Activated CD4-positive, alpha-beta memory T cell treated with anti-CD3 and anti-CD28 coated beads for 36 hours (primary cell): ENCODE measurements at regions of chr10 and their contacts with region 1.

Region 1: DNA sequence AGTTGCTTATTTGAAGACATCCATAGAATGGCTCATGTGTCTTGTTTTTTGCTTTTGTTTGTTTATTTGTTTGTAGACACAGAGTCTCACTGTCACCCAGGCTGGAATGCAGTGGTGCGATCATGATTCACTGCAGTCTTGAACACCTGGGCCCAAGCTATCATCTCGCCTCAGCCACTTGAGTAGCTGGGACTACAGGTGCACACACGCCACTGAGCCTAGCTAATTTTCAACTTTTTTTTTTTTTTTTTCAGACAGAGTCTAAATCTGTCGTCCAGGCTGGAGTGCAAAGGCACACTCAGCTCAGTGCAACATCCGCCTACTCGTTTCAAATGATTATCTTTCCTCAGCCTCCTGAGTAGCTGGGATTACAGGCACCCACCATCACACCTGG is 83.3 kb upstream of the KLF6 start:
- DNase-seq: no peak
- H3K4me3 Mint-ChIP-seq: no peak overlapping the region
- H3K27ac Mint-ChIP-seq: peak overlapping the region; percentile 93
- H3K4me1 Mint-ChIP-seq: peaks cover 76% of the 10 kb centered on the region
- H3K27me3 Mint-ChIP-seq: no peaks in the 10 kb centered on the region

Region 2: DNA sequence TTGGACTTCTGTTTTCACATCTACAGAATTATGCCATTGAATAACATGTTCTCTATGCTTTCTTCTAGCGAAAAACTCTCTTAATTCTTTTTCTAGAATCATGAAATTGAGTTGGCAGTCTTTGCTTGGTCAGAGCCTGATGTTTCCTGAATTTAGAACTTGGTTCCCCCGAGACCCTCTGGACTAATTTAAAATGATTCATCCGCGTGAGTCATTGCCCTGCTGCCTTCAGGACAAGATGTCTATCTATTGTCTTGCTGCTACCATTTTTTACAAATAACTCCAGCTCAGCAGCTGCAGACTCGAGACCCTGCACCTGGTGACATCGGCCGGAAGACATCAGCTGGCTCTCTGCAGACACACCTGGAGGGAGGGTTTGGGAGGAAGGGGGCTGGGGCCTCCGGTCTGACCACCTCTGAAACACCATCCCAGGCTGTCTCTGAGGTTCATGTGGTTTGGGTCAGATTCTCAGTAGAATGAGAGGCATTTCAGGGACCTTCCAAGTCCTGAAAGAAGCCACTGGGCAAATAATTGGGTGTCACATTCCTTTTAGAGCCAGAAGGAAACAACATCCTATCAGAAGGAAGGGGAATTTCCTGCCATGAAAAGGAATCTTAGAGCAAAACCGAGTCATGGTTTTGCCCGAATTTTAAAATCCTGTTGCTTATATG is 62.3 kb before region 1 on chr10:
- CTCF ChIA-PET with region 1: interaction called, 6 read pairs
- POLR2A ChIA-PET with region 1: interaction called, 82 read pairs
- intact Hi-C with region 1: loop called (anchors 1 kb)
- DNase-seq: peak; percentile 72
- H3K4me3 Mint-ChIP-seq: peak overlapping the region; percentile 68
- H3K27ac Mint-ChIP-seq: no peak overlapping the region
- H3K4me1 Mint-ChIP-seq: peaks cover 62% of the 10 kb centered on the region
- H3K27me3 Mint-ChIP-seq: no peaks in the 10 kb centered on the region

Region 3: DNA sequence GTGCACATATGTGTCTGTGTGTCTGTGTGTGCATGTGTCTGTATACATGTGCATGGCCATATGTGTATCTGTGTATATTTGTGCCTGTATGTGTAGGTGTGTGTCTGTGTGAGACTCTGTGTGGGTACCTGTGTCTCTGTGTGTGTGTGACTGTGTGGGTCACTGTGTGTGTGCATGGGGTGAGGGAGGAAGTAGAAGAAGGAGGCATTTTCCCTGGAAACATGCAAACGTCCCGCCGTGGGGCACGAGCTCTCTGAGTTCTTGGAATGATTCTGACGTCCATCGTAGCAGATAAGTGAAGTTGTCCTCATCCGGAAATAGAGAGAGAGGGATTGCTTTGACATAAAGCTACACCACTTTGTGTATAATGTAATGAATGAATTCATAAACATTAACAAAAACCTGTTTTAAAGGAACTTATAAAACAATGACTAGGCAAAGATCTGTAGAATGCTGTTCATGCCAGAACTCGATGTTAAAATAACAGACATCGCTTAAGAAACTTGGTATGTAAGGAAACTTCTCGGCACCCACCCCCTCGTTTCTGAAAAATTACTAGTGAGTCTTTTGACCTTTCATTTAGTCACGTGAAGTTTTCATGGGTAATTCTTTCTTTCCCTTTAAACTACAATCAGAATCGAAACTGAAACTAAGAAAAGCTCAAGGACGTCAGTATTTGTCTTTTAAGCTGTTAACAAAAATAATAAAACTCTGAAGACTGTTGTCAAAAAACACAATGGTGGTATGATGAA is 39.7 kb before region 1 on chr10:
- CTCF ChIA-PET with region 1: interaction called, 3 read pairs
- POLR2A ChIA-PET with region 1: interaction called, 15 read pairs
- intact Hi-C with region 1: loop called (anchors 1 kb)
- DNase-seq: peak; percentile 70
- H3K4me3 Mint-ChIP-seq: peak overlapping the region; percentile 56
- H3K27ac Mint-ChIP-seq: peak overlapping the region; percentile 97
- H3K4me1 Mint-ChIP-seq: peaks cover 63% of the 10 kb centered on the region
- H3K27me3 Mint-ChIP-seq: no peaks in the 10 kb centered on the region

Region 4: GRCh38 chr10:3835770-3836169 is 32.5 kb before region 1 on chr10:
- CTCF ChIA-PET with region 1: no interaction called
- POLR2A ChIA-PET with region 1: interaction called, 11 read pairs
- intact Hi-C with region 1: loop called (anchors 1 kb)
- DNase-seq: no peak
- H3K4me3 Mint-ChIP-seq: peak overlapping the region; percentile 43
- H3K27ac Mint-ChIP-seq: peak overlapping the region; percentile 80
- H3K4me1 Mint-ChIP-seq: peaks cover 72% of the 10 kb centered on the region
- H3K27me3 Mint-ChIP-seq: no peaks in the 10 kb centered on the region

Region 5: DNA sequence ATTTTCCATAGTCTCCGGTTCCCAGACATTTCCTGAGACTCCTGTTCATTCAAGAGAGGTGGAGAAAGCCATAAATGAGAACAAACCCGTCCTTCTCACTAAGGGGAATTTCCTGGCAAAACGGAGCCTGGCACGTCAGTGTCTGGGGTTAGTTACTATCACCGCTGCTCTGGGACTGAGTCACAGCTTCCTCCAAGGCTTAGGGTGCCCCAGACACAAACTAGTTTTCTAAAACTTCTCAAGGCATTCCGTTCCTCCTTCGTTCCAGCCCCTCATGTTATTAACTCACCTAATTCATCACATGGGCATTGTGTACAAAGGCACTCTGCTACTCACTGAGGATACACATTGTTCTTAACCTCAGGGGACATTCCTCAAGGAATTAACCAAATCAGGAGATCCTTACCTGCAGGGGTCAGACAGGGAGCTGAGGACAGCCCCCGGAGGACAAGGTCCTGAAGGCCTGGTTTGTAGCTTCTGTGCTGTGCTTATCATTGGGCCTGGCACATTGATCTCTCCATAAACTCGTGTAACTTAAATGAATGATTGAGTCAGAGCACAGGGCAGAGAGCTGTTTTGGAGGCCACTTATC is 19.7 kb after region 1 on chr10:
- CTCF ChIA-PET with region 1: no interaction called
- POLR2A ChIA-PET with region 1: interaction called, 10 read pairs
- intact Hi-C with region 1: no loop called
- DNase-seq: peak; percentile 87
- H3K4me3 Mint-ChIP-seq: peak overlapping the region; percentile 58
- H3K27ac Mint-ChIP-seq: peak overlapping the region; percentile 96
- H3K4me1 Mint-ChIP-seq: peaks cover 68% of the 10 kb centered on the region
- H3K27me3 Mint-ChIP-seq: no peaks in the 10 kb centered on the region

Region 6: DNA sequence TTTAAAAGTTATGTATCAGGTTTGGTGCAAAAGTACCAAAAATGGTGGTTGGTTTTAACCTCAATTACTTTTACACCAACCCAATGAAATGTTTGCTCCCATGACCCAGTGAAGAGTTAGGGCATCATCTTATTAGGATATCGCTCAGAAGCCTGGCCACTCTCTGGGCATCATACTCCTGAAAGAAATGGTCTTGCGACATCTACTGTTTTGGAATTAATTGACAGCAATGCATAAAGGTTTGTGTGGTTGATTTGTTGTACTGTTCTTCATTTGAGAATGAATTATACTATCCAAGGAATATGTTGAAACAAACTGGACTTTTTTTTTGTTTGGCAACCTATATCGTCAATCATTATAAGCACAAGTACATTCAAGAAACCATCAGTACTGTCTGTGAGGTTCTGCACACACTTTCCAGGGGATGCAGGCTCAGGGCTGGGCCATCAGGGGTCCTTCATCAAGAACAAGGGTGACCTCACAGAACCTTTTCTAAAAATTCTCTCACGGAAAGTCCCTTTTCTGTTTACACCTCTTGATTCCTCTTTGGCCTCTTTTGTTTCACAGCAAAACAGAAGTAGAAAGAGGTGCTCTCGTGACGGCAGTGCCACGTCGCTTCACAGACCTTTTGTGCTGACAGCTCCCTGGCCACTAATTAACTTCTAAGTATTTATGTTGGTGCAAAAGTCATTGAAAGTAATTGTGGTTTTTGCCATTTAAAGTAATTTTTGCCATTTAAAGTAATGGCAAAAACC is 34.0 kb after region 1 on chr10:
- CTCF ChIA-PET with region 1: no interaction called
- POLR2A ChIA-PET with region 1: interaction called, 3 read pairs
- intact Hi-C with region 1: loop called (anchors 2 kb)
- DNase-seq: peak; percentile 69
- H3K4me3 Mint-ChIP-seq: no peak overlapping the region
- H3K27ac Mint-ChIP-seq: peak overlapping the region; percentile 79
- H3K4me1 Mint-ChIP-seq: peaks cover 45% of the 10 kb centered on the region
- H3K27me3 Mint-ChIP-seq: no peaks in the 10 kb centered on the region